ENCODE measurements at regions of chr16 and their contacts with region 1.

Region 1: DNA sequence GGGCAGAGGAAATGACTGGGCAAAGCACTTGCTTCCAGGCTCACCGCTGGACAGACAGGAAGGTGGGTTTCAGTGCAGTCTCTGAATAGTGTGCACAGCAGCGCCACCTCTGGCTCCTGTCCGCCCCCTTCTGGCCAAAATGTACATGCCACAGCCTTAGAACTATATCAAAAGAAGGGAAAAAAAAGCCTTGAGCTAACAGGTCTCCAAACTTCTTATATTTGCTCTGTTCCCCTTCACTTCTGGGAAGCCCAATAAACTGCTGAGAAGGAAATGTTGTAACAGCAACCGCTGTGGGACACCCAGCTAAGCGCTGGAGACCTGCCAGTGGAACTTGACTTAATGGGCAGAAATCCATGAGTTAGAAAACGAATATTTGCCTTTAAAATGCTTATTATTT is 17.5 kb downstream of the COG7 start:
- DNase-seq: peak; percentile 79

Region 2: DNA sequence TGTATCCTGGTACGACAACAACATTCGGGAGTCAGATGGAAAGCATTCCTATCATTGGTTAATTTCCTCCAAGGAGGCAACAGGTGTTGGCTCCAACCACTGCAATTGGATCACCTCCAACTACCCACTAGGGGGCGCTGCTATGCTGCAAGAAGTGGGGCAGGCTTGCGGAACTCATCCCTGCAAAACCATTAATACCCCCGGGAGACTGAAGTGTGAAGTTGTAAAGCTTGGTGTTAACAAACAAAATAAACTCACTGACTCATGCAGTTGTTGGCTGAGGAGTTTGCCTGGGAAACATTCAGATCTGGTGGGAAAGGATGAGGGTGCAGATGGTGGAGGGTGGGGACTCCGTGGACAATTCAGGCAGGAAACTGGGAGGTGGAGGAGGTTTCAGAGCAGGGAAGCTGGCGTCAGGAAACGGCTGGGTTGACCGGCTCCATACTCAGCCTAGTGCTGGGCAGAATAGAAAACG is 536.6 kb before region 1 on chr16:
- intact Hi-C with region 1: loop called (anchors 10 kb)
- DNase-seq: peak; percentile 86

Region 3: GRCh38 chr16:23060458-23061320 is 374.8 kb before region 1 on chr16:
- intact Hi-C with region 1: loop called (anchors 10 kb)
- DNase-seq: no peak

Region 4: GRCh38 chr16:23182460-23183309 is 252.8 kb before region 1 on chr16 and contains the start of gene SCNN1G:
- intact Hi-C with region 1: loop called (anchors 1 kb)
- DNase-seq: peak; percentile 76
- total RNA-seq, gene SCNN1G: not detected

Measured in cardiac septum (tissue), 1 donor.